HCT116 (cell line): ENCODE measurements at regions of chr1 and their contacts with region 1.

Region 1: DNA sequence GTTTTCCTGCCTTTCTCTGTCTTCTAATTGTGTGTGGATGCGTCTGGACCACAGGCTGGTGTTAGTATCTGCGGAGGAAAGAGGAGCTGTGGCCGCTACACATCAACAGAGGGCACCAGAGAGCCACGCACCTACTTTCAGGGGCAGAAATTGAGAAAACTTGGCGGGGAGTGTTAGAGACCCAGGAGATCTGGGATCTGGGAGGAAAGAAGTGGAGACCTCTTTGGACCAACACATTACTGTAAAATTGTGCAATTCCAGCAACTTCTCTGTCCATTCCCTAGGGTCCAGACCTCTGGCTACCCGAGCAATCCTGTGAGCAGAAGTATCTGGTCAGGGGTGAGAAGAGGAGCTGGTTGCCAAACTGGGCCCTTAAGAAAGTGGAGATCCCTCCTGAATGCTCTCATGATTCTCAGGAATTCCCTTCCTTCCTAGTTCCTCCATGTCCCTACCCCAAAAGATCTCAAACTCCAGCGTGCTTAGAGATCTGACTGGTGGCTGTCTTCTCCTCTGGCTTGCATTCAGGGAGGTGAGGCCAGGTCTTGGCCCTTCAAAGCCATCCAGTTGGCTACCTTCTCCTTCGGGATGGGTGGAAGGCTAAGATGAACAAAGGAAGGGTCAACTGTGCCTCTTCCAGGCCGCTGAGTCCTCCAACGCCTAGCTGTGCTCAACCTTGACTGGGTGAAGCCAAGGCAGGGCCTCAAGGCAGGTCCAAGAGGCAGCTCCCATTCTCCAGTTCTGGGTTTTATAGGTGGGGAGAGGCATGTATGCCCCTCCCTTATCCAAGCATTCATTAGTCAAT is 1.2 kb upstream of the KIRREL1 start:
- DNase-seq: no peak
- ATAC-seq: peak; percentile 67
- H3K4me3 ChIP-seq: 0 out of 4 replicates have a peak overlapping the region, but pooled peaks of 1 of the 2 experiments have one; percentile 93
- H3K27ac ChIP-seq: peak overlapping the region; percentile 45; the same call in 1 of the 2 replicates
- H3K4me1 ChIP-seq: peaks cover 10 to 26% of the 10 kb centered on the region in 2 experiments; a peak in 3 of 4 replicates
- H3K27me3 ChIP-seq: peaks cover 10% of the 10 kb centered on the region; the same call in 1 of the 2 replicates
- CTCF ChIP-seq: peak; percentile 97 to 98 (median 97)
- POLR2A ChIP-seq: no peak
- RAD21 ChIP-seq: peak; percentile 98

Region 2: DNA sequence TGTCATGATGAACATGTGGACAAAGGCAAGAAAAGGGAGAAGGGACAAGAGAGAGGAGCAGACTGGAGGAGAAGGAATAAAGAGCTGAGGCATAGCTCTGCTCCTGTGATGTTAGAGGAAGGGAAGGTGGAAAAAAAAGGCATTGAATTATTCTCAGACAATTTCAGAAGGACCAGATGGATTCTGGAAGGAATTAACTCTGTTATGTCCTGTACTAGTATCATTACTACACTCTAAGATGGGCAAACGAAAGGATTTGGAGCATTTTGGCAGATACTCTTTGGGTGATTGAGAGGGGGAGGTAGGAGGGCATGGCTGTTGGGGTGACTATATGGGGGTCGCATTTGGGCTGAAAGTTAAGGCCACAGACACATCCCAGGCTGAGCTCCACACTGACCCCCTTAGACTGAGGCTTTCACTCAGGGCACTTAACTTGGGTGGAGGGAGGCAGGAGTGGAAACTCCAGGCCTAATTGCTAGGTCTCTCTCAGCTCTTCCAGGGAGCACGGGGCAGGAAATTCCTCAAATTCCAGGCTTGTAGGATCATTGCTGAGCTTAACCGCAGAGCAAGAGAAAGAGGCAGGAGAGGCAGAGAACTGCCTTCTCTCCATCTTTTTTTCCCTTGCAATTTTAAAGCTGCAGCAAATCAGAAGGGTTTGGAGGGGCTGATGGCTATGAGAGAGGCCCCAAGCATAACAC is 27.1 kb after region 1 on chr1:
- CTCF ChIA-PET with region 1: interaction called, 12 read pairs
- POLR2A ChIA-PET with region 1: interaction called, 3 read pairs
- RAD21 ChIA-PET with region 1: interaction called in 1 of 2 experiments, 4 read pairs
- intact Hi-C with region 1: no loop called
- DNase-seq: peak; percentile 73
- ATAC-seq: peak; percentile 95
- H3K4me3 ChIP-seq: peak overlapping the region; percentile 22 to 51
- H3K27ac ChIP-seq: peak overlapping the region; percentile 82
- H3K4me1 ChIP-seq: peaks cover 48 to 69% of the 10 kb centered on the region in 2 experiments
- H3K27me3 ChIP-seq: no peaks in the 10 kb centered on the region
- CTCF ChIP-seq: no peak
- POLR2A ChIP-seq: no peak
- RAD21 ChIP-seq: no peak

Region 3: GRCh38 chr1:158035976-158036583 is 43.8 kb after region 1 on chr1:
- CTCF ChIA-PET with region 1: interaction called, 44 read pairs
- POLR2A ChIA-PET with region 1: interaction called, 4 read pairs
- RAD21 ChIA-PET with region 1: interaction called, 5 to 11 read pairs
- intact Hi-C with region 1: loop called (anchors 1 kb)
- DNase-seq: peak; percentile 28
- ATAC-seq: peak; percentile 54
- H3K4me3 ChIP-seq: no peak overlapping the region
- H3K27ac ChIP-seq: no peak overlapping the region
- H3K4me1 ChIP-seq: peaks cover 9 to 23% of the 10 kb centered on the region in 2 experiments
- H3K27me3 ChIP-seq: no peaks in the 10 kb centered on the region
- CTCF ChIP-seq: peak; percentile 69 to 81 (median 77)
- POLR2A ChIP-seq: no peak
- RAD21 ChIP-seq: peak; percentile 82

Region 4: DNA sequence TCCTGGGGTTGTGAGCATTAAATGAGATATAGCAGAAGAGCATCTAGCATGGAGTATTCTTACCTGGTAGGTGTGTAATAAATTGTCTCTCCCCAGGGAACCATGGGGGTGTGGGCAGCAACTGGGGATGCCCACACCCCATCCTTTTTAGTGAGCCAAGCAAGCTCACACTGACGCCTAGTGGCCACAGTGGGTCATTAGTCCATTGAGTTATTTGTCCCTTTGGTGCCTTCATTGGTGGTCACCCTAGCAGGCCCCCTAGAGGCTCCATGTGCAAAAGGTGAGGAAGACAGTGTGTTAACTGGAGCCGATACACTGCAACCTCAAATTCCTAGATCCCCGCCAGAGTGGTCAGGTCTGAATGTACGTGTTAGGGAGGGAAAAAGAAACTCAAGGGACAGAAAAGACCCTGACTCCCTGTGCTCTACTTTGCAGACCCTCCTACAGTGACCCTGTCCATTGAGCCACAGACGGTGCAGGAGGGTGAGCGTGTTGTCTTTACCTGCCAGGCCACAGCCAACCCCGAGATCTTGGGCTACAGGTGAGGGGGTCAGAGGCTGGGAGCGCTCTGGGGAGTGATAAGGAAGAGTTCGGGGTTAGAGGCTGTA is 95.2 kb after region 1 on chr1:
- CTCF ChIA-PET with region 1: interaction called, 38 read pairs
- POLR2A ChIA-PET with region 1: no interaction called
- RAD21 ChIA-PET with region 1: interaction called, 7 to 11 read pairs
- intact Hi-C with region 1: loop called (anchors 1 kb)
- DNase-seq: peak; percentile 70
- ATAC-seq: peak; percentile 96
- H3K4me3 ChIP-seq: no peak overlapping the region
- H3K27ac ChIP-seq: no peak overlapping the region
- H3K4me1 ChIP-seq: no peaks in the 10 kb centered on the region
- H3K27me3 ChIP-seq: no peaks in the 10 kb centered on the region
- CTCF ChIP-seq: peak; percentile 95 to 98 (median 97)
- POLR2A ChIP-seq: no peak
- RAD21 ChIP-seq: peak; percentile 90